ENCODE measurements at regions of chr22 and their contacts with region 1.

Region 1: DNA sequence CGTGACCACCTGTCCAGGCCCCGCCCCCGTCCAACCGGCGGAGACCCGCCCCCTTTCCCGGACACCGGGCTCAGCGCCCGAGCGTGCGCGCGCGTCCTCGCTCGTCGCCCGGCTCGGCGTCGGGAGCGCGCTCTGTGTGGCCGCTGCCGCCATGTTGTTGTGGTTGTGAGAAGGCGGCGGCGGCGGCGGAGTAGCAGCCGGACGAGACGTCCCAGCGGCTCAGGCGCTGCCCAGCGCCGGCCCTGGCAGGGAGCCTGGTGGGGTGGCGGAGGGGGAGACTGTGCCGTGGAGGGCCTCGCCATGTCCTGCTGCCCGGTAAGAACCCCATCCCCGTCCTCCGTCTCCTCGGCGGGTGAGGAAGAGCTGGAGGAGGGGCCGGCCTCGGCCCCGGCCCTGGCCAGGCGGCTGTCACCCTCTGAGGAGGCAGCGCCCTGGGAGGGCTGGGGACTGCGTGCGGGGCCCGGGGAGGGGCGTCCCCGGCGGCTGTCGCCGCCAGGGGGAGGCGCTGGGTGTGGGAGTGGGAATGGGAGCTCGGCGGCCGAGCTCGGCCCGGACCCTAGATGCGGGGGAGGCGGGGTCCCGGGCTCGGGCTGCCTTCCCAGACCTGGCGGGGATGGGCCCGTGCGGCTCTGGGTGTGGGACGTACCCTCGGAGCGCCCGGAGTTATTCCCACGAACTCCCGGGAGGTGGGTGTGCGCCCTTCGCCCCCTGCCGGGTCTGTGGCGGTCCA is at the start of gene MTMR3:
- DNase-seq: peak; percentile 98
- ATAC-seq: peak; percentile 91
- total RNA-seq, gene MTMR3: 32.3 TPM

Region 2: DNA sequence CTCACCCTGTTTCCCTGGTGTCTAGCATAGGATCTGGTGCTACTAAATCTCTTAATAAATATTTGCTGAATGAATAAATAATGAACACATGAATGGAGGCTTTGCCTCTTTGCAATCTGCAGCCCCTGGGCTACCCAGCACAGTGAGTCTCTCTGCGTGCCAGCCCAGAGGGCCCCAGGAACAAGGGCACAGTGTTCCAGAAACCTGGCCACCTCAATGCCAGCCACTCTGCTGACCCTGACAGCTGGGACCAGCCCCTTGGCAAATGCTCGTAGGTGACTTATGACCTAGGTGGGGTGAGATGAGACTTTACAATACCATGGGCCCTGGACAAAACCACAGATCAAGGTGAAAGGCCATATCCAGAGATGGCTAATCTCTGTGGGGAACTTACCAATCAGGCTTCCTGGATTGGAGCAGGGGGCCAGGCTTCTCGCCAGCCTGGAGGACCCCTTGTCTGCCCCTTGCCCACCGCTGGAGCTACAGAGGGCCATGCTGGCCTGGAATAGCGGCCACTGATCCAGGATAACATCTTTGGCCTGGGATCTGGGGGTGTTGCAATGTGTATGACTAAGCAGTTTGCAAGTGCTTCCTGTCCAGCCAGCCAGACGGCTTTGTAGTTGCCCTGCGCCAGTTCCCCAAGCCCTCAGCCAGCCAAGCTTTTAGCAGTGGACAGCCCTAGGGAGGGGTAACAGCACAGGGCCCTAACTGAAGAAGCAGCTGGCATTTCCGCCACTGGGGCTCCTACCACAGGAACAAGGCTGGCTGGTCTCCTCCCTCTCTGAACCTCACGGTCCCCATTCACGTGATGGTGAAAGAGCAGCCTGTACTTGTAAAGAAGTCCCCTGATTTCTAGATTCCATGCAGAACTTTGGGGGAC is 84.2 kb before region 1 on chr22:
- intact Hi-C with region 1: no loop called
- DNase-seq: peak; percentile 95
- ATAC-seq: peak; percentile 96

Region 3: GRCh38 chr22:29837780-29838598 is 45.2 kb before region 1 on chr22 and contains the start of gene ASCC2:
- intact Hi-C with region 1: loop called (anchors 2 kb)
- DNase-seq: peak; percentile 100
- ATAC-seq: peak; percentile 100
- total RNA-seq, gene ASCC2: 33.8 TPM

Region 4: DNA sequence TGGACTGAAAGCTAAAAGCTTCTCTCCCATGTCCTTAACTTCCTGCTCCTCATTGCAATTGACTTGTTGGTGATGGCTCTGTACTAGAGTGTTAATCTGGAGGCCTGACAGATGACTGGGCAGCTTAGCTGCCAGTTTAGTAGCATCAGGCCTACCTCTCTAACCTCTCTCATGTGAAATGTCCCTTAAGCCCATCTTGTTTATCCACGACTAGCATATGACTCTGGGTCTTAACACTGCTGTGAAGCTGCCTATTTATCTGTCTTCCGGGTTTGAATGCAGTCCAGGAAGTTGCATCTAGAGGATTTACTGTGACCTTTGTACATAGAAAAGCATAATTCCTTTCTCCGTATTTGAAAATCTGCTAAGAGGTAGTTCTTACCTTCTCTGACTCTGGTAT is 111.7 kb after region 1 on chr22:
- intact Hi-C with region 1: loop called (anchors 5 kb)
- DNase-seq: no peak
- ATAC-seq: peak; percentile 44